ENCODE measurements at regions of chr9 and their contacts with region 1.

Region 1: GRCh38 chr9:9625248-9625647 is 987.6 kb downstream of the PTPRD start:
- DNase-seq: no peak
- ATAC-seq: no peak
- H3K4me3 ChIP-seq: no peak overlapping the region
- H3K4me3 Mint-ChIP-seq: no peak overlapping the region
- H3K27ac ChIP-seq: no peak overlapping the region
- H3K27ac Mint-ChIP-seq: no peak overlapping the region
- H3K4me1 ChIP-seq: no peaks in the 10 kb centered on the region
- H3K4me1 Mint-ChIP-seq: no peaks in the 10 kb centered on the region
- H3K27me3 ChIP-seq: no peaks in the 10 kb centered on the region
- H3K27me3 Mint-ChIP-seq: no peaks in the 10 kb centered on the region
- CTCF ChIP-seq: no peak

Region 2: DNA sequence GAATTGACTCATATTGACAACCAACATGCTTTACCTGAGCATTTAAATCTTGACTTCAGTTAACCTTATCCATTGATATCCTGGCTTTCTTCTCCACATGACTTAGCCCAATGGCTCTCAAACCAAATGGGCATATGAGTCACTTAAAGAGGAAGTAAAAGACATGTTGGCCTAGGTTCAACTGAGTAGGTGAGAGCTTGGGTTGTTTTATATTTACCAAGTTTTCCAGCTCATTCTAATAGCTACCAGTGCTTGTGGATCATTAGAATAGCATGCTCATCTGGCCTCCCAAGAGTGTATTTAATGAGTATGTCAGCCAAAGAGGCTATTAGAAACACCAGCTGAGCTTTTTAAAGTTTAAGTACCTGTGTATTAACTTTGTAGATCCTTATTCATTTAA is 61.4 kb before region 1 on chr9:
- intact Hi-C with region 1: loop called (anchors 2 kb)
- DNase-seq: no peak
- ATAC-seq: no peak
- H3K4me3 ChIP-seq: no peak overlapping the region
- H3K4me3 Mint-ChIP-seq: no peak overlapping the region
- H3K27ac ChIP-seq: no peak overlapping the region
- H3K27ac Mint-ChIP-seq: no peak overlapping the region
- H3K4me1 ChIP-seq: no peaks in the 10 kb centered on the region
- H3K4me1 Mint-ChIP-seq: no peaks in the 10 kb centered on the region
- H3K27me3 ChIP-seq: no peaks in the 10 kb centered on the region
- H3K27me3 Mint-ChIP-seq: no peaks in the 10 kb centered on the region
- CTCF ChIP-seq: no peak

Region 3: DNA sequence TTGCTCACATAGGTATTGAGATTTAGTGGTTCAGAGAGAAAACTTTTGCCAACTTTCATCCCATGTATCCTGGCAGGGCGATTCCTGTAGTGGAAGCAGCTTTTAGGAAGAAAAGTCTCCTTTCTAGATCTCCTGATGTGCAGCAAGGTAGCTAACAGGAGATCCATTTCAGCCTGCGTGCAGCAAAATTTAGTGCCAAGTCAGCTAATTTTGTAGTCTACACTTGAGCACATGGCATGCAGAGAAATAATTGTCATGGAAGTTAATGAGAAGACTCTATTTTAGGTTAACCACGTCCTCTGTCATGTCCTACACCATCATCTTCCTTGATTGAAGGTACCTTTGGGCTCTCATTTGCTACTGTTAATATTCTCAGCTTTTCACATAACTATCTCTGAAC is 821.8 kb after region 1 on chr9:
- intact Hi-C with region 1: no loop called
- DNase-seq: no peak
- ATAC-seq: no peak
- H3K4me3 ChIP-seq: no peak overlapping the region
- H3K4me3 Mint-ChIP-seq: no peak overlapping the region
- H3K27ac ChIP-seq: no peak overlapping the region
- H3K27ac Mint-ChIP-seq: no peak overlapping the region
- H3K4me1 ChIP-seq: no peaks in the 10 kb centered on the region
- H3K4me1 Mint-ChIP-seq: no peaks in the 10 kb centered on the region
- H3K27me3 ChIP-seq: no peaks in the 10 kb centered on the region
- H3K27me3 Mint-ChIP-seq: no peaks in the 10 kb centered on the region
- CTCF ChIP-seq: no peak

Measured in natural killer cell (primary cell).